HCT116 (cell line): ENCODE measurements at regions of chr4 and their contacts with region 1.

Region 1: DNA sequence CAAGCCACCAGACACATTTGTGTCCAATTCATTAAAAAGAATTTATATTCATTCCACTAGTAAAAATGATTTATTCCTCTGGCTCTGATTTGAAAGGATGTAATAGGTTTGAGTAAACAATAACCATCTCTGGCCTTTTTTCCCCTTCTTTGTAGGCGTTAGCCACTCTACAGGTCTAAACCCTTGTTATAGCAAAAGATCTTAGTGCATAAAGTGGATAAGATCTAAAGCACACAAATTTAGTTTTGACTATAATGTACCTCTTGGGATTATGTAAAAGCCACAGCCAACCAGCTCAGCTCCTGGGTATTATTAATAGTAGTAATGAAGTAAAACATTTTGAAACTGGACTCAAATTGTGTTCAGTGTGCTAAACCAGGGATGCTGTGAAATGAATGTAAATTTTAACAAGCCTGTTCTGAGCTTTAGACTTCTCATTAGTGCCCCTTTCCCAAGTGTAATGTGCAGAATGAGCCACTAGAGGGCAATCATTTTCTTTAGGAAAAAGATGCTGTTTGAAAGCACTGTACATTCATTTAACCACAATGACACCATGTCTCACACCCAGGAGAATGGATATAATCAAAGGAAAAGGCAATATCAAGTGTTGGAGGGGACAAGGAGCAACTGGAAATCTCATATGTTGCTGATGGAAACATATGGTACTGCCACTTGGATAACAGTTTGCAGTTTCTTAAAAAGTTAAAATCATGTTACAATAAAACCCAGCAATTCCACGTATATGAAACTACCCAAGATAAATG is 69.7 kb downstream of the KLHL8 start:
- DNase-seq: peak; percentile 55
- ATAC-seq: peak; percentile 85
- H3K4me3 ChIP-seq: no peak overlapping the region
- H3K27ac ChIP-seq: no peak overlapping the region
- H3K4me1 ChIP-seq: no peaks in the 10 kb centered on the region
- H3K27me3 ChIP-seq: no peaks in the 10 kb centered on the region
- CTCF ChIP-seq: peak; percentile 73 to 95 (median 84)
- POLR2A ChIP-seq: no peak
- RAD21 ChIP-seq: peak; percentile 83

Region 2: DNA sequence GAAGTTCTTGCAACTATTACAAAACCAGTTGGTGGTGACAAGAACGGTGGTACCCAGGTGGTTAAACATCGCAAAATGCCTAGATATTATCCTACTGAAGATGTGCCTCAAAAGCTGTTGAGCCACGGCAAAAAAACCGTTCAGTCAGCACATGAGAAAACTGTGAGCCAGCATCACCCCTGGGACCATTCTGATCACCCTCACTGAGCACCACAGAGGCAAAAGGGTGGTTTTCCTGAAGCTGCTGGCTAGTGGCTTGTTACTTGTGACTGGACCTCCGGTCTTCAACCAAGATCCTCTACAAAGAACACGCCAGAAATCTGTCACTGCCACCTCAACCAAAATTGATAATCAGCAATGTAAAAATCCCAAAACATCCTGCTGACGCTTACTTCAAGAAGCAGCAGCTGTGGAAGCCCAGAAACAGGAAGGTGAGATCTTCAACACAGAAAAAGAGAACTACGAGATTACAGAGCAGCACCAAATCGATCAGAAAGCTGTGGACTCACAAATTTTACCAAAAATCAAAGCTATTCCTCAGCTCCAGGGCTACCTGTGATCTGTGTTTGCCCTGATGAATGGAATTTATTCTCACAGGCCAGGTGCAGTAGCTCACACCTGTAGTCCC is 280.1 kb before region 1 on chr4:
- CTCF ChIA-PET with region 1: no interaction called
- POLR2A ChIA-PET with region 1: no interaction called
- RAD21 ChIA-PET with region 1: no interaction called
- intact Hi-C with region 1: no loop called
- DNase-seq: no peak
- ATAC-seq: no peak
- H3K4me3 ChIP-seq: no peak overlapping the region
- H3K27ac ChIP-seq: no peak overlapping the region
- H3K4me1 ChIP-seq: no peaks in the 10 kb centered on the region
- H3K27me3 ChIP-seq: no peaks in the 10 kb centered on the region
- CTCF ChIP-seq: no peak
- POLR2A ChIP-seq: no peak
- RAD21 ChIP-seq: no peak

Region 3: GRCh38 chr4:87220094-87220822 is 69.6 kb after region 1 on chr4 and contains the start of gene KLHL8:
- CTCF ChIA-PET with region 1: interaction called, 16 read pairs
- POLR2A ChIA-PET with region 1: no interaction called
- RAD21 ChIA-PET with region 1: interaction called in 1 of 2 experiments, 3 read pairs
- intact Hi-C with region 1: no loop called
- DNase-seq: peak; percentile 49
- ATAC-seq: peak; percentile 96
- H3K4me3 ChIP-seq: peak within 1 kb of the TSS; percentile 98 to 99
- H3K27ac ChIP-seq: peak within 1 kb of the TSS; percentile 91
- H3K4me1 ChIP-seq: peaks cover 2 to 17% of the 10 kb centered on the region in 2 experiments; a peak in 3 of 4 replicates
- H3K27me3 ChIP-seq: no peaks in the 10 kb centered on the region
- CTCF ChIP-seq: 0 out of 6 replicates have a peak, but pooled peaks of 1 of the 3 experiments have one; percentile 2
- POLR2A ChIP-seq: peak; percentile 94
- RAD21 ChIP-seq: no peak
- total RNA-seq, gene KLHL8: 24.2 TPM

Region 4: GRCh38 chr4:87235020-87235671 is 84.5 kb after region 1 on chr4:
- CTCF ChIA-PET with region 1: interaction called, 9 read pairs
- POLR2A ChIA-PET with region 1: no interaction called
- RAD21 ChIA-PET with region 1: interaction called in 1 of 2 experiments, 5 read pairs
- intact Hi-C with region 1: loop called (anchors 1 kb)
- DNase-seq: no peak
- ATAC-seq: peak; percentile 21; the same call in 1 of the 2 replicates
- H3K4me3 ChIP-seq: peak overlapping the region in 1 of 2 experiments; percentile 55; a peak in 1 of 4 replicates
- H3K27ac ChIP-seq: no peak overlapping the region
- H3K4me1 ChIP-seq: peaks cover 0 to 10% of the 10 kb centered on the region in 2 experiments; a peak in 2 of 4 replicates
- H3K27me3 ChIP-seq: no peaks in the 10 kb centered on the region
- CTCF ChIP-seq: no peak
- POLR2A ChIP-seq: no peak
- RAD21 ChIP-seq: no peak